Lower lobe of right lung (tissue), 2 donors: ENCODE measurements at regions of chr7 and their contacts with region 1.

Region 1: DNA sequence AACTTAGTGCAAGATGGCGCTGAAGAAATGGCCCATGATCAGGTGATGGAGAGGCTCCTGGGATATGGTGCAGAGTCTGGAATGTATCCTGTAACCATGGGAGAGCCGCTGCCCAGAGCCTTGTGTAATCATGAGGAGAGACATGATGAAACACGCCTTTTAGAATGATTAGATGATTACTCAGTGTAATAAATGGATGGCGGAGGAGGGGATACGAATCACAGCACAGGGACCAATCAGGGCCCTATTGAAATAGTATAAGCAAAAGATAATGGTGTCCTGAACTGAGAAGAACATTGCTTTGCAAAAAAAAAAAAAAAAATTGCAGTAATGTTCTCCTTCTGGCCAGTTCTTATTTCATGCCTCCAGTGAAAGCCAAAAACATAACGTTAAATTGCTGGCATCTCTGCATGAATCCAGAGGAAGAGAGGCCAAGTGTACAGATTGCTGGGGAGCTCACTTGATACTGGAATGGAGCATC is 668.5 kb upstream of the AUTS2 start:
- DNase-seq: no peak
- ATAC-seq: peak in 1 of 2 donors; percentile 46
- H3K4me3 ChIP-seq: no peak overlapping the region
- H3K27ac ChIP-seq: no peak overlapping the region
- H3K4me1 ChIP-seq: no peaks in the 10 kb centered on the region
- H3K27me3 ChIP-seq: no peaks in the 10 kb centered on the region
- CTCF ChIP-seq: no peak

Region 2: DNA sequence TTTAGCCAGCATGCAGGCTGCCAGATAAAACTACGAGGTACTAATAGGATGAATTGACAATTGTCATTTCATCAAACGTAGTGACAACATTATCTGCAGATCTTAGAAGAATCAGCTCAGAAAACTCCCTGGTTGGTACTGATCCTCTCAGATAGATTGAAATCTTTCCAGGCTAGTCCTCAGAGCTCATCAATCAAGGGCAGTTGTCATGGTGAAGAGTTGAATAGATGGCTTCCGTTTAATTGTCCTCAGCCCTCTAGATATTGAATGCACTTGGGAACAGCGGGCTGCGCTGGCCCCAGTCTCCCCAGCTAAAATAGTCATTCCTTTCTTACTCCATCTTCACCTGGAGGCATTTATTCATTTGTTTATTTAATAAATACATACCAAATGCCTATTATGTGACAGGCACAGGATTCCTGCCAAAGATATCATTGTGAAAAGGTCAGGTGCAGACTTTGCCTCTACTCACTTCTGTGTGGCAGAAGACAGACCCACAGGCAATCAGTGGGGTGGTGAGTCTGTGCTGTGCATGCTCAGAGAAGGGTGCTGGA is 851.6 kb before region 1 on chr7:
- intact Hi-C with region 1: no loop called
- DNase-seq: no peak
- ATAC-seq: no peak
- H3K4me3 ChIP-seq: no peak overlapping the region
- H3K27ac ChIP-seq: no peak overlapping the region
- H3K4me1 ChIP-seq: no peaks in the 10 kb centered on the region
- H3K27me3 ChIP-seq: no peaks in the 10 kb centered on the region
- CTCF ChIP-seq: no peak

Region 3: GRCh38 chr7:68269405-68269804 is 660.4 kb before region 1 on chr7:
- intact Hi-C with region 1: loop called (anchors 10 kb)
- DNase-seq: no peak
- ATAC-seq: no peak
- H3K4me3 ChIP-seq: no peak overlapping the region
- H3K27ac ChIP-seq: no peak overlapping the region
- H3K4me1 ChIP-seq: no peaks in the 10 kb centered on the region
- H3K27me3 ChIP-seq: no peaks in the 10 kb centered on the region
- CTCF ChIP-seq: no peak

Region 4: GRCh38 chr7:69553190-69553589 is 623.4 kb after region 1 on chr7:
- intact Hi-C with region 1: no loop called
- DNase-seq: no peak
- ATAC-seq: no peak
- H3K4me3 ChIP-seq: no peak overlapping the region
- H3K27ac ChIP-seq: no peak overlapping the region
- H3K4me1 ChIP-seq: no peaks in the 10 kb centered on the region
- H3K27me3 ChIP-seq: no peaks in the 10 kb centered on the region
- CTCF ChIP-seq: no peak